Cardiac septum (tissue), 1 donor: ENCODE measurements at regions of chr7 and their contacts with region 1.

Region 1: GRCh38 chr7:55325371-55325792 is 39.8 kb upstream of the LANCL2 start:
- DNase-seq: peak; percentile 79

Region 2: GRCh38 chr7:55307123-55307915 is 18.1 kb before region 1 on chr7:
- intact Hi-C with region 1: loop called (anchors 2 kb)
- DNase-seq: no peak